ENCODE measurements at regions of chr2 and their contacts with region 1.

Region 1: DNA sequence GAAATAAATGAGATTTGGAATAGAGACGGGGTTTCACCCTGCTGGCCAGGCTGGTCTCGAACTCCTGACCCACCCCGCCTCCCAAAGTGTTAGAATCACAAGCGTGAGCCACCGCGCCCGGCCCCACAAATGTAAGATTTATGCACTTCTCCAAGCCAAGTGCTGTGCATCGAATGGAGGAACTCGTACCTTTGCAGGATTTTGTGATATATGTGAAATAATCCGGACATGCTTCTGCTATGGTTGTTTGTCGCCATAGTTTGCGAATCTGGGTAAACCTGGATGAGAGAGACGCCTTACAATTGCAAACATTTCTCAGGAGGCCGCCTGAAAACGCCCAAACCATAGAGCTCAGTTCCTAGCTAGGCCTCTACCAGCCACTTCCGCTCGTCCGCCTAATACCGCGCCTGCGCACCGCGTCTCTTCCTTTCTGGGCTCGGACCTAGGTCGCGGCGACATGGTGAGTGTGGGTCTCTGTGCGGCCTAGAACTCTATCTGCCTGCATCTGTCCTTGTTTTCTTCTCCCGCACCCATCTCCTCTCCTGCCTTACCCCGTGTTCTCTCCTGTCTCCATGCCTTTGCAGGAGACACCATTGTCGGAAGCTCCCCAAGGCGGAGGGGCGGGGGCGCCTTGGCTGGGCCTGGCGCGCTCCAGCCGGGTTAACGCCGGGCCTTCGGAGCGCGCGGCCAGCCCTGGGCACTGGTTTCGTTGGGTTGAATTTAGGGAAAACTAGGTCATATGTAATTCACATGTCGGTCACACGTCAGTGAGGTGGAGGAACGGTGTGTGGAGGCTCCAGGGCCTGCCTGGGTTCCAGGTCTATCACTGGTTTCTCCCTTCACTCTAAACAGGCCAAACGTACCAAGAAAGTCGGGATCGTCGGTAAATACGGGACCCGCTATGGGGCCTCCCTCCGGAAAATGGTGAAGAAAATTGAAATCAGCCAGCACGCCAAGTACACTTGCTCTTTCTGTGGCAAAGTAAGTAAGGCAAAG is at the start of gene RPL37A:
- DNase-seq: peak; percentile 82
- ATAC-seq: peak; percentile 97
- H3K4me3 Mint-ChIP-seq: peak within 1 kb of the TSS; percentile 98
- H3K27ac Mint-ChIP-seq: peak within 1 kb of the TSS; percentile 92
- H3K4me1 Mint-ChIP-seq: peaks cover 63% of the 10 kb centered on the region
- H3K27me3 Mint-ChIP-seq: no peaks in the 10 kb centered on the region
- CTCF ChIP-seq: no peak
- total RNA-seq, gene RPL37A: 4,501 and 5,377 TPM in 2 replicates

Region 2: GRCh38 chr2:214809751-214810564 is 1688.8 kb before region 1 on chr2:
- CTCF ChIA-PET with region 1: no interaction called
- POLR2A ChIA-PET with region 1: no interaction called
- intact Hi-C with region 1: loop called (anchors 2 kb)
- DNase-seq: peak; percentile 100
- ATAC-seq: peak; percentile 85
- H3K4me3 Mint-ChIP-seq: peak overlapping the region; percentile 98
- H3K27ac Mint-ChIP-seq: peak overlapping the region; percentile 92
- H3K4me1 Mint-ChIP-seq: peaks cover 35% of the 10 kb centered on the region
- H3K27me3 Mint-ChIP-seq: no peaks in the 10 kb centered on the region
- CTCF ChIP-seq: no peak

Region 3: GRCh38 chr2:216013080-216013909 is 485.4 kb before region 1 on chr2 and contains the start of gene MREG:
- CTCF ChIA-PET with region 1: no interaction called
- POLR2A ChIA-PET with region 1: interaction called, 3 read pairs
- intact Hi-C with region 1: loop called (anchors 10 kb)
- DNase-seq: peak; percentile 79
- ATAC-seq: peak; percentile 84
- H3K4me3 Mint-ChIP-seq: peak within 1 kb of the TSS; percentile 89
- H3K27ac Mint-ChIP-seq: peak within 1 kb of the TSS; percentile 76
- H3K4me1 Mint-ChIP-seq: peaks cover 66% of the 10 kb centered on the region
- H3K27me3 Mint-ChIP-seq: no peaks in the 10 kb centered on the region
- CTCF ChIP-seq: no peak
- total RNA-seq, gene MREG: 16.2 and 16.6 TPM in 2 replicates

Region 4: GRCh38 chr2:216222650-216223352 is 275.9 kb before region 1 on chr2:
- CTCF ChIA-PET with region 1: interaction called, 3 read pairs
- POLR2A ChIA-PET with region 1: interaction called, 27 read pairs
- intact Hi-C with region 1: loop called (anchors 1 kb)
- DNase-seq: peak; percentile 37
- ATAC-seq: peak; percentile 80
- H3K4me3 Mint-ChIP-seq: peak overlapping the region; percentile 64
- H3K27ac Mint-ChIP-seq: peak overlapping the region; percentile 97
- H3K4me1 Mint-ChIP-seq: peaks cover 25% of the 10 kb centered on the region
- H3K27me3 Mint-ChIP-seq: no peaks in the 10 kb centered on the region
- CTCF ChIP-seq: no peak

Region 5: DNA sequence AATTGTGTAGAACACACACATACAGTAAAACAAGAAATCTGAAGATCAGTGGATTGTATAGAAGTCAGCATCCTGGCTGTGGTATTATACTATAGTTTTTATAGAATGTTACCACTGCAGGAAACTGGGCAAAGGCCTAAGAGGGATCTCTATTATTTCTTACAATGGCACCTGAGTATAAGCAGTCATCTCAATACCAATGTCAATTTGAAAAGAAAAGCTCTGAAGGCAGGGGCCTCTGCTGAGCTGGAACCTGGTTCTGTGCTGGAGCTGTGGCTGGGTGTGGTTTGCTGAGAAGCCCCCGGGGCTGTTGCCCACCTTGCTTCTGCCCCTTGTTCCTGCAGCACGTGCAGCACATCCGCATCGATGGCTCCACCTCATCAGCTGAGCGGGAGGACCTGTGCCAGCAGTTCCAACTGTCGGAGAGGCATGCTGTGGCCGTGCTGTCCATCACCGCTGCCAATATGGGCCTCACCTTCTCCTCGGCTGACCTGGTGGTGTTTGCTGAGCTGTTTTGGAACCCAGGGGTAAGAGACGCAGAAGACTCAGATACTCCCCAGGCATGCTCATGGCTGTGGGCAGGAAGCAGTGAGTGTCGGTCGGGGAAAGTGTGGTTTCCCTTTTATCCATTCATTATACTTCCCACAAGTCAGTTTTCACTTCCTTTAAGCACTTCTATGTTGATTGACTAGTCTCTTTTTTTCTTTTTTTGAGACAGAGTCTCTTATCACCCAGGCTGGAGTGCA is 23.6 kb before region 1 on chr2:
- CTCF ChIA-PET with region 1: no interaction called
- POLR2A ChIA-PET with region 1: interaction called, 11 read pairs
- intact Hi-C with region 1: loop called (anchors 2 kb)
- DNase-seq: no peak
- ATAC-seq: peak; percentile 49
- H3K4me3 Mint-ChIP-seq: peak overlapping the region; percentile 52
- H3K27ac Mint-ChIP-seq: no peak overlapping the region
- H3K4me1 Mint-ChIP-seq: peaks cover 14% of the 10 kb centered on the region
- H3K27me3 Mint-ChIP-seq: no peaks in the 10 kb centered on the region
- CTCF ChIP-seq: no peak

Measured in activated B cell treated with CpG ODN at 0.5 μM for 24 hours (primary cell).